GM10248 (cell line): ENCODE measurements at regions of chr12 and their contacts with region 1.

Region 1: DNA sequence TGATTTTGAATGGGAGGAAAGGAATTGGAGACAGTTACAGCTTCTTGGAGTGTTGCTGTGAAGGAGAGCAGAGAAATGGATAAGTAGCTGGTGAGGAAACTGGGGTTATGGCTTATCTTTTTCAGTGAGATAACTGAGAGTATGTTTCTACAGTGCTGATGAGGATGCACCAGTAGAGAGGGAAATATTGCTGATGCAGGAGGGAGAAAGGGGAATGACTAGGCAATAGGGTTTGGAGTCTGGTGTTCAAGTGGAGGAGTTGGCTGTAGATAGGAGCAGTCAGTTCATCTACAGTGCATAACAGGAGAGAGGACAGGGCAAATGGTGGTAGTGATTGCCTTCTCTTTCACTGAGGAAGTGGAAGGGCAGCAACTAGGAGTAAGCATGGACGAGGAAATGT is 33.0 kb downstream of the SPATS2 start:
- DNase-seq: no peak
- CTCF ChIP-seq: no peak

Region 2: GRCh38 chr12:49410818-49411217 is 10.5 kb after region 1 on chr12:
- CTCF ChIA-PET with region 1: interaction called, 11 read pairs
- POLR2A ChIA-PET with region 1: no interaction called
- DNase-seq: no peak
- CTCF ChIP-seq: no peak